ENCODE measurements at regions of chr5 and their contacts with region 1.

Region 1: GRCh38 chr5:135127505-135128239 is 93.6 kb upstream of the PITX1 start:
- DNase-seq: peak; percentile 79
- H3K4me3 Mint-ChIP-seq: peak overlapping the region; percentile 22
- H3K27ac Mint-ChIP-seq: no peak overlapping the region
- H3K4me1 Mint-ChIP-seq: peaks cover 36% of the 10 kb centered on the region
- H3K27me3 Mint-ChIP-seq: no peaks in the 10 kb centered on the region
- CTCF ChIP-seq: no peak

Region 2: DNA sequence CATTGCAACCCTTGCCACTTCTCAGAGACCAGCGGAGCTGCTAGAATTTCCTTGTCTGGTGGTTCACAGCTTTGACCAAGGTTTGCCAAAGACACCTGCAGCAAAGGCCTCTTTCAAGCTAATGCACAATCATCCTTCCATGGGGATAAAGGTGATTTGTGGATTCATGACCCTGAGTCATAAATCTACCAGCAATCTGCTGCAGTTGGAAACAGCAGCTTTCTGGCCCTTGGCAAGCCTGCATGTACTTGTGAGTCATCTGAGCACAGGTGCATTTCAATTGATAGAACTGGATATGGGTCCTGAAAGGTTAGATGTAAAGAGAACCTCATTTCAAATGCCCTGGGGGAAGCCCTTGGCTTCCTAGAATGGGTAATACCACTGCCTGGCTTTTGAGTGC is 1034.8 kb before region 1 on chr5:
- CTCF ChIA-PET with region 1: interaction called, 10 read pairs
- intact Hi-C with region 1: no loop called
- DNase-seq: peak; percentile 65
- H3K4me3 Mint-ChIP-seq: peak overlapping the region; percentile 17
- H3K27ac Mint-ChIP-seq: peak overlapping the region; percentile 14
- H3K4me1 Mint-ChIP-seq: peaks cover 26% of the 10 kb centered on the region
- H3K27me3 Mint-ChIP-seq: no peaks in the 10 kb centered on the region
- CTCF ChIP-seq: no peak

Region 3: GRCh38 chr5:135034236-135034962 is 93.3 kb before region 1 on chr5:
- CTCF ChIA-PET with region 1: no interaction called
- intact Hi-C with region 1: loop called (anchors 5 kb)
- DNase-seq: peak; percentile 72
- H3K4me3 Mint-ChIP-seq: peak overlapping the region; percentile 65
- H3K27ac Mint-ChIP-seq: peak overlapping the region; percentile 14
- H3K4me1 Mint-ChIP-seq: peaks cover 16% of the 10 kb centered on the region
- H3K27me3 Mint-ChIP-seq: peaks cover 81% of the 10 kb centered on the region
- CTCF ChIP-seq: no peak

Region 4: DNA sequence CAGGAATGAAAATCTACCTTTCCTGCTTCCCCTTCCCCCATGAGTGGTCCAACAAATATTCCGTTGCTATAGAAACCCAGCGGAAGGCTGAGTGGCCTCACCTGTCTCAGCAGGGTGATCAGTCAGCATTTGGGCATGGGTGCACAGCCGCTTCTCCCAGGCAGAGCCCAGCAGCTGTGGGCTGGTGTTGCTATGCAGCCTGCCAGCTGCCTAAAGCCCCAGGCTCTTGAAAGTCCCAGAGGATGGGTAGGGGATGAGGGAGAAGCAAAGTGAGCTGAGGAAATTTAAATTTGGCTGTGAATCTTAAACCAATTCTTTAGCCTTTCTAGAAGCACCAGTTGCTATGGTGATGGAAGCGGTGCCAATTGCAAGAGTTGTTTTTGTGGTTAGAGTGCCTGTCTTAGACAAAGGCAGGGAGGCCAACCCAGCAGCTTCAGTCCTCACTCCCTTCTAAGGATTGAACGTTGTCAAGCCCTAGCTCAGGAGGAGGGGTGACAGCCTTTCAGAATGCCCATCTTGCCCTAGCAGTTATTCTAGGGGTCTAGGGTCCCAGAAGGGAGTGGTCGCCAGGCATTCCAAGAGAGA is 57.9 kb after region 1 on chr5:
- CTCF ChIA-PET with region 1: no interaction called
- intact Hi-C with region 1: loop called (anchors 5 kb)
- DNase-seq: no peak
- H3K4me3 Mint-ChIP-seq: no peak overlapping the region
- H3K27ac Mint-ChIP-seq: no peak overlapping the region
- H3K4me1 Mint-ChIP-seq: peaks cover 13% of the 10 kb centered on the region
- H3K27me3 Mint-ChIP-seq: no peaks in the 10 kb centered on the region
- CTCF ChIP-seq: no peak